ENCODE measurements at regions of chr9 and their contacts with region 1.

Region 1: GRCh38 chr9:126781186-126782052 is 23.4 kb upstream of the ZBTB43 start:
- DNase-seq: peak; percentile 96
- H3K4me3 ChIP-seq: peak overlapping the region; percentile 13 to 30 (median 21)
- H3K27ac ChIP-seq: no peak overlapping the region
- H3K4me1 ChIP-seq: peaks cover 0 to 14% (median 7%) of the 10 kb centered on the region in 4 donors
- H3K27me3 ChIP-seq: peaks cover 0 to 51% (median 0%) of the 10 kb centered on the region in 4 donors
- CTCF ChIP-seq: peak in 2 of 3 experiments; percentile 95 to 96
- EP300 ChIP-seq: no peak
- POLR2A ChIP-seq: no peak

Region 2: GRCh38 chr9:126611592-126612325 is 169.7 kb before region 1 on chr9:
- intact Hi-C with region 1: loop called (anchors 5 kb)
- DNase-seq: no peak
- H3K4me3 ChIP-seq: peak overlapping the region; percentile 40 to 58 (median 48)
- H3K27ac ChIP-seq: no peak overlapping the region
- H3K4me1 ChIP-seq: peaks cover 34 to 59% (median 53%) of the 10 kb centered on the region in 4 donors
- H3K27me3 ChIP-seq: peaks cover 15 to 85% (median 52%) of the 10 kb centered on the region in 4 donors
- CTCF ChIP-seq: peak; percentile 68 to 89 (median 79)
- EP300 ChIP-seq: no peak
- POLR2A ChIP-seq: no peak

Region 3: DNA sequence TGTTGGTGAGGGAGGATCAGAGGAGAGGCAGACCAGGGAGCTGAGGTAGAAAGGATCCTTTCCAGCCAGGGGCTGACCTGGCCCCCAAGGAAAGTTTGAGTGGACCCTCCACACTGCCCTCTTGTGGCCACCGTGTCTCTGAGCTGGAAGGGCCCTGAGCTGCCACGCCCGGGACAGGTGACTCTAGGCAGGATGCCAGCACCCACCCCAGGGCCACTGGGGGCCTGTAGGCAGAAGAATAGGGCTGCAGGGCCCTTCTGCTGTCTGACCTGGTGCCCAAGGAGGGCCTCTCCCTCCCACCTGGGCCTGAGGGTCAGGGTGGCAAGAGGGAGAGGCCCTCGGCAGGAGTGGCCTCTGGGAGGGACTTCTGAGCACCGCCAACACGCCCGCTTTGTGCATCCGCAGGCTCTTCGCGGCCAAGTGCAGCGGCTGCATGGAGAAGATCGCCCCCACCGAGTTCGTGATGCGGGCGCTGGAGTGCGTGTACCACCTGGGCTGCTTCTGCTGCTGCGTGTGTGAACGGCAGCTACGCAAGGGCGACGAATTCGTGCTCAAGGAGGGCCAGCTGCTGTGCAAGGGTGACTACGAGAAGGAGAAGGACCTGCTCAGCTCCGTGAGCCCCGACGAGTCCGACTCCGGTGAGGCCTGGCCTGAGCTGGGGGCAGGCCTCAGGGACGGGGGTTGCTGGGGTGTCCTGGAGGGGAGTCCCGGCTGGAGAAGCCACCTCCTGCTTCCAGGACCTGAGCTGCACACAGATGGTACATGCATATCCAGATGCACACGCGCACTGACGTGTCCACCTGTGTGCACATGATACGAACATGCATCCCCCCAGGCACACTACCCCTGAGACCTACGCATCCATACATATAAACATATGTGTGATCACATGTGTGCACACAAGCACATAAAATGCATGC is 90.7 kb before region 1 on chr9:
- intact Hi-C with region 1: no loop called
- DNase-seq: no peak
- H3K4me3 ChIP-seq: no peak overlapping the region
- H3K27ac ChIP-seq: no peak overlapping the region
- H3K4me1 ChIP-seq: no peaks in the 10 kb centered on the region
- H3K27me3 ChIP-seq: peaks cover 0 to 63% (median 0%) of the 10 kb centered on the region in 4 donors
- CTCF ChIP-seq: peak; percentile 39 to 58 (median 43)
- EP300 ChIP-seq: no peak
- POLR2A ChIP-seq: no peak

Region 4: DNA sequence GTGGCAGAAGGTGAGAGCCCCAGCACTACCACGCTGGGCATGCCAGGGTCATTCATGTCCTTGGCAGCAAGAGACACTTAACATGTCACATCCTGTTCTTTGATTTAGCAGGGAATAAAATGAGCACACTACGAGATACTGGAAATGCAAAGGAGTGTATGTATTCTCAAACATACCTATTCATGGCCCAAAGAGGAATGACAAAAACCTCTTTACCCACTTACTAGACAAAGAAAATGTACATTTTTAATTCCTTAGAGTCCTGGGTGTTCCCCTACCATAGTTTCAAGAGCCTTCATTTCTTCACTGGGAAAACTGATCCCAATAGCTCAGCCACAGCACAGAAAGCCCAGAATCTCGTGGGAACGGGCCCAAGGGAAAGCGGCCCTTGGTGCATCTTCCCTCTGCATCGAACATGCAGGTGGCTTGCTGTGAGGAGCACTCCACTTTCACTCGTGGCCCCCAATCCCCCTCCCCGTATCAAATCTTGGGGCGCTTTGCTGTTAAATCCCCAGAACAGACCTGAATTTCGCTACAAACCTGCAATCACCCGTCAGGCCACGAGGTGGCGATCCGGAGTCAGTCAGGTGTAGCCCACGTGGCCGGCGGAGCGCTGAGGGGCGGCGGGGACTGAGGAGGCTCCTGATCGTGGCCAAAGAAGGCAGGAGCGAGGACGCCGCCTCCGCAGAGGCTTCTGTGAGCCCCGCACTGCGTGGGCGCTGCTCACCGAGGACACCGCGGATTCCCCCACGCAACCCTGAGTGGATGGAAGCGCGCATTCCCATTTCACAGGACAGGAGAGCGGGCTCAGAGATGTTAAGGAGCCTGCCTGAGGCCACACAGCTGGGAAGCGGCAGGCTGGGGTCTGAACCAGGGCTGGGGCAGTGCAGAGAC is 76.3 kb before region 1 on chr9:
- intact Hi-C with region 1: loop called (anchors 1 kb)
- DNase-seq: peak; percentile 97
- H3K4me3 ChIP-seq: peak overlapping the region; percentile 30 to 49 (median 36)
- H3K27ac ChIP-seq: no peak overlapping the region
- H3K4me1 ChIP-seq: peaks cover 14 to 25% (median 20%) of the 10 kb centered on the region in 4 donors
- H3K27me3 ChIP-seq: peaks cover 0 to 52% (median 18%) of the 10 kb centered on the region in 4 donors
- CTCF ChIP-seq: peak; percentile 92 to 94 (median 93)
- EP300 ChIP-seq: no peak
- POLR2A ChIP-seq: no peak

Region 5: DNA sequence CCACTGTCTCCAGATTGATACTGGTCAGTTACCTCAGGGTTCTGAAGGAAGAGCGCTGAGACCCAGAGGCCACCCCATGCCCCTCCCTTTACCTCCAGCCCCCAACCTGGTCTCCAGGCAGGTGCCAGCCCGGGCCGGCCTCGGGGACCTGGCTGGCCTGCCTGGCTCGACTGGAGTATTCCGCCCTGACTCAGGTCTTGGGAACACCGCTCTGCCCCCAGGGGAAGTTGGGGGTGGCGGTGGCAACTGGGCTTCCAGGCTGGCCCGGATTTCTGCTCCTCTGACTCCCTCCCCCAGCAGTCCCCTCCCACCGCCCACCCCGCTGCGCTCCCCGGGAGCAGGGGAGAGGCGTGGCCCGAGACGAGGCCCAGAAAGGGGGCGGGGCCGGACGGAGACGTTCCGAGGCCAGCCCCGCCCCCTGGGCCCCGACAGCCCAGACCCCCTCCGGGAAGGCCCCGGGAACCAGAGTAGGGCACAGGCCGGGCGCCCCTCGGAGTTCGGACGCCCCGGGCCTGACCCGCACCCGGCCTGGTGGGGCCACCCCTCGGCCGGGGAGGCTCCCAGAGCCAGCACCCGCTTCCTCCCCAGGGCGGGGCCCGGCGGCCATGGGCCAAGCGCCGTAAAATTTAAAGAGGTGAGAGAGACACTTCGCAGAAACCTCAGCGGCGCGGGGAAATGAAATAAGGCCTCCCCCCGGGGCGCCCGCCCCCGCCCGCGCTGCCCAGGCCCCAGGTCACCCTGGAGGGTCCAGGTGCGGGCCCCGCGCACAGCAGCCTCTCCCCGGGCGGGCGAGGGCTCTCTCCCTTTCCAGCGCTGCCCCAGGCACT is 59.0 kb before region 1 on chr9:
- intact Hi-C with region 1: loop called (anchors 5 kb)
- DNase-seq: peak; percentile 94
- H3K4me3 ChIP-seq: peak overlapping the region; percentile 68 to 85 (median 73)
- H3K27ac ChIP-seq: peak overlapping the region; percentile 81 to 88 (median 84)
- H3K4me1 ChIP-seq: peaks cover 5 to 23% (median 22%) of the 10 kb centered on the region in 4 donors
- H3K27me3 ChIP-seq: peaks cover 0 to 16% (median 0%) of the 10 kb centered on the region in 4 donors
- CTCF ChIP-seq: no peak
- EP300 ChIP-seq: no peak
- POLR2A ChIP-seq: no peak

Region 6: DNA sequence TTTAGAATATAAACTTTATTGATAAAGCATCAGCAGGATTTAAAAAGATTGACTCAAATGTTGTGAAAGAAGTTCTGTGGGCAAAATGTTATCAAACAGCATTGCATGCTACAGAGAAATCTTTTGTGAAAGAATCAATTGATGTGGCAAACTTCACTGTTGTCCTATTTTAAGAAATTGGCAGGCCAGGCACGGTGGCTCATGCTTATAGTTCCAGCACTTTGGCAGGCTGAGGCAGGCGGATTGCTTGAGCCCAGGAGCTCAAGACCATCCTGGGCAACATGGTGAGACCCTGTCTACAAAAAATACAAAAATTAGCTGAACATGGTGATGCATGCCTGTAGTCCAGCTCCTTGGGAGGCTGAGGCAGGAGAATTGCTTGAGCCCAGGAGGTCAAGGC is 40.9 kb after region 1 on chr9:
- intact Hi-C with region 1: no loop called
- DNase-seq: no peak
- H3K4me3 ChIP-seq: no peak overlapping the region
- H3K27ac ChIP-seq: no peak overlapping the region
- H3K4me1 ChIP-seq: peaks cover 0 to 10% (median 8%) of the 10 kb centered on the region in 4 donors
- H3K27me3 ChIP-seq: no peaks in the 10 kb centered on the region
- CTCF ChIP-seq: no peak
- EP300 ChIP-seq: no peak
- POLR2A ChIP-seq: no peak

Region 7: GRCh38 chr9:126914458-126915280 is 133.2 kb after region 1 on chr9 and contains the start of gene RALGPS1:
- intact Hi-C with region 1: no loop called
- DNase-seq: peak; percentile 98
- H3K4me3 ChIP-seq: peak within 1 kb of the TSS; percentile 67 to 92 (median 76)
- H3K27ac ChIP-seq: peak within 1 kb of the TSS; percentile 81 to 86 (median 84)
- H3K4me1 ChIP-seq: peaks cover 10 to 16% (median 13%) of the 10 kb centered on the region in 4 donors
- H3K27me3 ChIP-seq: no peaks in the 10 kb centered on the region
- CTCF ChIP-seq: no peak
- EP300 ChIP-seq: no peak
- POLR2A ChIP-seq: no peak
- total RNA-seq, gene RALGPS1: 4.6 to 11.9 (median 10.0) TPM

Measured in esophagus muscularis mucosa (tissue), 4 donors.